Heart left ventricle (tissue), 16 donors: ENCODE measurements at regions of chr1 and their contacts with region 1.

Region 1: DNA sequence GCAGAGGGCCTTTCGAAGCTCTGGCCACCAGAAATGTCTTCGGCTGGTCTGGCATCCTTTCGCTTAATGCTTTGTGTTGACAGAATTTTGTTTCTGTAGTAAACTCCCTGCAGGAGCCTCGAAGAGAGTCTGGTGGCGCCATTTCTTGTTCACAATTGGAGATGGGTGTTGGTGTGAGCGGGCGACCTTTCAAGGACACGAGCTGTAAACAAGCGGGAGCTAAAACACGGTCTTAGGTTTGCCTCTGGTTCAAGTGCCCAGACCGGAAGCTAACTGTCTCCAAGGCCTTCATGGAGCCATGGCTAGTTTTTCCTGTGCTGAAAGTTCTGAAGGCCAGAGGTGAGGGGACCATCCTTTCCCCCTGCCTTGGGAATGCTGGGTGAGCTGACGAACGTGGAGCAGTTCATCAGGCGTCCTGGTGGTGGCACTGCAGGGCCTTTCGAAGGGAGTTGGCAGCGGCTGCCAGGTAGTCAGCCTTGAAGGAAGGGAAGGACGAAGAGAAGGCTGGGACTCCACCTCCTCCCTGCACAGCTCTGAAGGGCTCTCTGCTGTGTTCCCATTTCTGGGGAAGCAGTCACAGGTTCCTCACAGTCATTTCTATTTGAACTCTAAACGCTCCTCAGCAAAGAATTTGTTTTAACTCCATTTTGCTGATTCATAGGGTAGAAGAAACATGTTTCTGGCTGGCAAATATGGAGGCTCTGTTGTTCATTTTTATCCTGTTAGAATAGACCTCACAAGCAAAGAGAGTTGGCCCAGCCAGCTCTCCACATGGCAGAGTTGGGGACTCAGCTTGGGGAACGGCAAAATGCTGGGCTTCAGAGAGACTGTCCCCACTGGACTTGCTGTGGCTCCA is 35.2 kb downstream of the URB2 start:
- DNase-seq: peak; percentile 78 to 89 (median 81)
- ATAC-seq: peak; percentile 80 to 95 (median 92)
- H3K4me3 ChIP-seq: no peak overlapping the region
- H3K27ac ChIP-seq: no peak overlapping the region
- H3K4me1 ChIP-seq: peaks cover 0 to 6% (median 0%) of the 10 kb centered on the region in 12 donors
- H3K27me3 ChIP-seq: no peaks in the 10 kb centered on the region
- CTCF ChIP-seq: peak; percentile 75 to 92 (median 88)
- POLR2A ChIP-seq: no peak

Region 2: DNA sequence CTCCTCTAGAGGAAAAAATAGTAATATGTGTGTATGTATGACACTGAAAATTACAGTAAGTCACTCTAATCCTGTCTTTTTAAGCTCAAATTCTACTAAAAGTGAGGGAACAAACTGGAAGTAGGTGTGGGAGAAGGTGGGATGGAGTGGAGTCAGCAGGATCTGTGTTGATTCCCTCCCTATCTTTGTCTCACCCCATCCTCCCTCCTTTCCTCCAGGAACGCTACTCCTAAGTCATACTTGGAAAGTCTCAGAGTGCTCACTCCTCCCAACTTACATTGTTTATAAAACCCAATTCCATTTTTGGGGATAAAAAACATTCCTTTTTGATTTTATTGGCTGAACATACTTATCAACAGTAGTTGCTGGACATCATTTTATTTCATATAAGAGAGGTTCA is 138.2 kb before region 1 on chr1:
- intact Hi-C with region 1: no loop called
- DNase-seq: no peak
- ATAC-seq: no peak
- H3K4me3 ChIP-seq: no peak overlapping the region
- H3K27ac ChIP-seq: no peak overlapping the region
- H3K4me1 ChIP-seq: no peaks in the 10 kb centered on the region
- H3K27me3 ChIP-seq: no peaks in the 10 kb centered on the region
- CTCF ChIP-seq: no peak
- POLR2A ChIP-seq: no peak

Region 3: GRCh38 chr1:229848752-229849677 is 187.8 kb after region 1 on chr1:
- intact Hi-C with region 1: loop called in 1 of 10 experiments (anchors 5 kb)
- DNase-seq: no peak
- ATAC-seq: no peak
- H3K4me3 ChIP-seq: no peak overlapping the region
- H3K27ac ChIP-seq: no peak overlapping the region
- H3K4me1 ChIP-seq: peaks cover 0 to 11% (median 3%) of the 10 kb centered on the region in 12 donors
- H3K27me3 ChIP-seq: no peaks in the 10 kb centered on the region
- CTCF ChIP-seq: peak in 11 of 12 donors; percentile 18 to 52 (median 35)
- POLR2A ChIP-seq: no peak

Region 4: GRCh38 chr1:230084138-230084880 is 423.1 kb after region 1 on chr1:
- intact Hi-C with region 1: loop called in 1 of 10 experiments (anchors 10 kb)
- DNase-seq: peak in 2 of 5 donors; percentile 63 to 75
- ATAC-seq: peak in 3 of 4 donors; percentile 16 to 79 (median 77)
- H3K4me3 ChIP-seq: no peak overlapping the region
- H3K27ac ChIP-seq: peak overlapping the region in 6 of 12 donors; percentile 16 to 48 (median 24)
- H3K4me1 ChIP-seq: peaks cover 0 to 64% (median 39%) of the 10 kb centered on the region in 12 donors
- H3K27me3 ChIP-seq: no peaks in the 10 kb centered on the region
- CTCF ChIP-seq: no peak
- POLR2A ChIP-seq: no peak

Region 5: DNA sequence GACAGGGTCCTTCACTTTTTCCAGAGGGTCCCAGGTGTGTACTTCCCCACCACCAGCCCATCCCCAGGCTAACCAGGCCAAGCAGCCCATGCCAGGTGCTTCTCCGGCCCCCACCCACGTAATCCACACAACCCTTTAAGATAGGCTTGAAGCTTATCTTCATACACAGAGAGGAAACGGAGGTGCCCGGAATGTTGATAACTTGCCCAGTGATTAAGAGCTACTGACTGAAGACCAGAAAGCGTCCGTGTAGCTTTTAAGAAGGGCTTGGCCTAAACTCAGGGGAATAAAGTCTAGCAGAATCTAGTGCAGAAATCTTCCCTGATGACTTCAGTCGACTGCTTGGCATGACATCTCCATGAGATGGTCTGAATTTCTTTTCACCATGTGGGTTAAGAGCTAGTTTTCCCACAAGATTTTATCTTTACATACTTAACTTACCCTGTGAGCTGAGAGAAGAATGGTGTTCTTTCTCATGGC is 544.5 kb after region 1 on chr1:
- intact Hi-C with region 1: loop called in 4 of 10 experiments (anchors 2 to 10 kb)
- DNase-seq: no peak
- ATAC-seq: peak in 3 of 4 donors; percentile 18 to 46 (median 32)
- H3K4me3 ChIP-seq: no peak overlapping the region
- H3K27ac ChIP-seq: peak overlapping the region in 2 of 12 donors; percentile 4 to 50
- H3K4me1 ChIP-seq: peaks cover 3 to 55% (median 44%) of the 10 kb centered on the region in 12 donors
- H3K27me3 ChIP-seq: no peaks in the 10 kb centered on the region
- CTCF ChIP-seq: no peak
- POLR2A ChIP-seq: no peak

Region 6: DNA sequence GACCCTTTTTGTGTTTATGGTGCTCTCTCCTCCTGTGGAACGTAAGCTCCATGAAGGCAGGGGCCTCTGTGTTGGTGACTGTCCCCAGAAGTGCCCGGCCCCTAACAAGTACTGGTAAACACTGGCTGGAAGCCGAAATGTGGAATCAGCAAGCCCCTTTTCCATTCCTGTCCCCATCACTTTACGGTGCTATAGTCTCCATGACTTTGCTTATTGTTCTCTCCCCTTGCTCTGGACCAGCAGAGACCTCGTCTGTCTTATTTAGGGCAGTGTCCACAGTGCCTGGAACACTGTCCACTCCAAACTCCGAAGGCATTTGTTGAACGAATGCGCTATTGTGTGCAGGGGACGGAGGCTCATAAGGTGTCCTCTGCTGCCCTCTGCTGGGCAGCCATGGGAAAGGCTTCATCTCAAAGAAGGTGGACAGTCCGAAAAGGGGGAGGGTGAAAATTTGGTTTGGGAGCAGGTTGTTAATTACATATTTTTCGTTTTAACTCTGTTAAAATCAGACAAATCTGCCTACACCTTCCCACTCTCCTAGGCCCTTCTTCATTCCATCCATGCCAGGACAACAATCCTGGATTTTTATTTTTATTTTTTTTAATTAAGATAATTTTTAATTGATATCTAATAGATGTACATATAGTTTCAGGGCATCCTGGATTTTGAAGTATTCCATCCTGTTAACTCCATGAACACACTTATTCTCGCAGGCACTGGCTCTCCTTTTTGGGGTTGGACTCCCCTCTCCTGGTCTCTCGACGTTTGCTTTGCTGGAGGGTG is 649.3 kb after region 1 on chr1:
- intact Hi-C with region 1: loop called (anchors 1 to 5 kb)
- DNase-seq: peak; percentile 67 to 82 (median 71)
- ATAC-seq: peak; percentile 75 to 88 (median 86)
- H3K4me3 ChIP-seq: no peak overlapping the region
- H3K27ac ChIP-seq: no peak overlapping the region
- H3K4me1 ChIP-seq: peaks cover 0 to 16% (median 1%) of the 10 kb centered on the region in 12 donors
- H3K27me3 ChIP-seq: peaks cover 0 to 9% (median 0%) of the 10 kb centered on the region in 9 donors
- CTCF ChIP-seq: peak; percentile 85 to 96 (median 92)
- POLR2A ChIP-seq: no peak